MCF 10A (cell line): ENCODE measurements at regions of chr1 and their contacts with region 1.

Region 1: DNA sequence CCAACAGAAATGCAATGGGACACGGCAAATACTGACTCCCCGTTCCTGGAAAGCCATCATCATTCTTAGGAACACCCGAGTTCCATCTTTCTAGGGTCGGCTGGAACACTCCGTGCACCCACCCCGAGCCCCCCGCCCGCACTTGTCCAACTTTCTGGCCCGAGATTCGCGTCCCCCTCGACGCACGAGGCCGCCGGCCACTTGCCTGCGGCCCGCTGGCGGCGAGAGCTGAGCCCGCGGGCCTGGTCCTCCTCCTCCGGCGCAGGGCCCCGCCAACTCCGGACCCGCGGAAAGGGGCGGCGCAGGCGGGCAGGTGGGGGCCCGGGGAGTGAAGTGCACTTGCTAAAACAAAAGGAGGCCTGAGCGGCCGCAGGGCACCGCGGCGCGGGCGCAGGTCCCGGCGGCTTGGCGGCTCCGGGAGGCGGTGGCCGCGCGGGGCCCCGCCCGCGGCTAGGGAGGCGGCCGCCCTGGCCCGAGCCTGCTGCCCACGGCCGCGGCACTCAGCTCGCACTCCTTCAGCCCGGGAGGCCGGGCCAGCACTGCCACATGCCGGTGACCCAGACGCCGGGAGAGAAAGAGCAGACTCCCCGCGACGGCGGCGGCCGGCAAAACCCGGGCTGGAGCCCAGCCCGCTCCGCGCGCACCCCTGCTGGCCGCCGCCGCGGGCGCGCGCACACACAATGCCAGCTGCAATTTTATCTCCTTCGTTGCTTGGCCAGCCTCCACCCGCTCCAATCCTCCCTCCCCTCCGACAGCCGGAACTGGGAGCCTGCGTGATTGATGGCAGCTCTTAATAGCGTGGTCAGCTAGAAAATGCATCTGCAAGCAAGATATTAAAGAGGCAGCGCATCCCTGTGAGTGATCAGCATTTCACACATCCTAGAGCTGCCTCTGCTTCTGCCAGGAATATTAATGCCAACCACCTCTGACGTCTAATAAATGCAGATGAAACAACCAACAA is 114.3 kb downstream of the RERE start:
- DNase-seq: peak; percentile 92
- H3K4me3 Mint-ChIP-seq: peak overlapping the region; percentile 79
- H3K27ac Mint-ChIP-seq: peak overlapping the region; percentile 90
- H3K4me1 Mint-ChIP-seq: peaks cover 28% of the 10 kb centered on the region
- H3K27me3 Mint-ChIP-seq: no peaks in the 10 kb centered on the region
- CTCF ChIP-seq: no peak

Region 2: DNA sequence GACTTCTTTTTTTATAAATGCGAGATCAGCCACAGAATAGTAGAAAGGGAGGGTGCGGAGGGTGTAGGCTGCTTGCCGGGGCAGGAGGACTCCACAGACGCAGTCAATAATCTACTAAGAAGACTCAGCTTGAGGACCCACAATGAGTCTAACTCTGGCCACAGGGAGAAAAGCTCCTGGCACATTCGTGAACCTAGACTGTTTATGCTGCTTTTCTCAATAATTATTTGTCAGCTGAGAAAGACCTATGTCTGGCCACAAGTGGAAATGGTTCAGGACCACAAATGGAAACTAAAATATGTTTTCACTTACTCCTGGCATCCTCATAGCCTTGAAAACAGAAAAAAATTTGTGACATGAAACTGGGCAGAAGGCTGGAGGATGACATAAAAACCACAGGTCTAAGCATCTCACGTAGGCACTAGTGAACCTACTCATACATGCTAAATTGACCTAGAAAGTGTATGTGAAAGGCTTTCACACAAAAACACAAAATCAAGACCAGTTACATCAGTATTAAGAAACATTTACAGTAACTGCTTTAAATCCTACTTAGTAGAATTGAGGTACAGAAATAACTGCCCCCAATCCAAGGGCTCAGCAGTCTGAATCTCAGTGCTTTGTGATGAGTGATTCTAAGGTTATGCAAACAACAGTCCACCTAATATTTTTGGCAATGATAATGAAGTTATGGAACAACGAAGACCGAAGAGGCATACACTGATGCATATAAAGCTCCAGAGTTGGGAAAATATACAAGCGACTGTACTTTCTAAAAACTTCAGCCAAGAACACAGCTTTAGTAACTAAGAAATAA is 225.8 kb before region 1 on chr1:
- CTCF ChIA-PET with region 1: no interaction called
- POLR2A ChIA-PET with region 1: no interaction called
- intact Hi-C with region 1: no loop called
- DNase-seq: no peak
- H3K4me3 Mint-ChIP-seq: no peak overlapping the region
- H3K27ac Mint-ChIP-seq: peak overlapping the region; percentile 35
- H3K4me1 Mint-ChIP-seq: peaks cover 5% of the 10 kb centered on the region
- H3K27me3 Mint-ChIP-seq: no peaks in the 10 kb centered on the region
- CTCF ChIP-seq: no peak

Region 3: DNA sequence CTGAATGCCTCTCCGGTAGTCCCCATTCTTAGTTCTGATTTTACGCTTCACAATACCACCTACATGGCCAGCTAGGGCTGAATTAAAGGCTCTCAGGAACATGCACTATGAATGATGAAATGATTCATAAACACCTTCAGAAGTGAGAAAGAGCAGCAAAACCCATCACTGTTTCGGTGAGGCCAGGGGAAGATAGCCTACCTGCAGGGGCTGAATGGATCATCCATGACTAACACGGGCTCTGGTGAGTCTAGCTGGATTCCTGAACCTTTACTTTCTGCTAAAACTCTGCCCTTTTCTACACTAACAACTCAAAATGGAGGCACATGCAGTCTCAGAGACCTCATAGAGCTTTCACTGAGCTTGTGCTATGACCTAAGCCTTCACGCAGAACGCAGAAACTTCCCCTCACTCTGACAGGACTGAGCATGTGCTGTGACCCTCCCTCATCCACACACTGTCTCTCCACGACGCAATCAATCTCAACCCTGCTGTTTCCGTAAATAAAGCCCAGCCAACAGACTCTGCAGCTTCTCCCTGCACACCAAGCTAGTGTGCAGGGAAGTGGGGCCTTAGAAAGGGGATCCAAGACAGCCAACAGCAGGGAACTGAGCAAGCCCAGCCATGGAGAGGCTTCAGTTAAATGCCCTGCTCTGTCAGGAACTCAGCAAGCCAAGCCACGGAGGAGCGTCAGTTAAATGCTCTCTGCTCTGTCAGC is 177.4 kb before region 1 on chr1:
- CTCF ChIA-PET with region 1: no interaction called
- POLR2A ChIA-PET with region 1: interaction called, 17 read pairs
- intact Hi-C with region 1: no loop called
- DNase-seq: peak; percentile 91
- H3K4me3 Mint-ChIP-seq: no peak overlapping the region
- H3K27ac Mint-ChIP-seq: no peak overlapping the region
- H3K4me1 Mint-ChIP-seq: peaks cover 23% of the 10 kb centered on the region
- H3K27me3 Mint-ChIP-seq: no peaks in the 10 kb centered on the region
- CTCF ChIP-seq: no peak

Region 4: GRCh38 chr1:8560611-8561544 is 142.3 kb before region 1 on chr1:
- CTCF ChIA-PET with region 1: interaction called, 7 read pairs
- POLR2A ChIA-PET with region 1: interaction called, 17 read pairs
- intact Hi-C with region 1: loop called (anchors 1 kb)
- DNase-seq: peak; percentile 69
- H3K4me3 Mint-ChIP-seq: no peak overlapping the region
- H3K27ac Mint-ChIP-seq: no peak overlapping the region
- H3K4me1 Mint-ChIP-seq: peaks cover 6% of the 10 kb centered on the region
- H3K27me3 Mint-ChIP-seq: no peaks in the 10 kb centered on the region
- CTCF ChIP-seq: peak; percentile 84

Region 5: DNA sequence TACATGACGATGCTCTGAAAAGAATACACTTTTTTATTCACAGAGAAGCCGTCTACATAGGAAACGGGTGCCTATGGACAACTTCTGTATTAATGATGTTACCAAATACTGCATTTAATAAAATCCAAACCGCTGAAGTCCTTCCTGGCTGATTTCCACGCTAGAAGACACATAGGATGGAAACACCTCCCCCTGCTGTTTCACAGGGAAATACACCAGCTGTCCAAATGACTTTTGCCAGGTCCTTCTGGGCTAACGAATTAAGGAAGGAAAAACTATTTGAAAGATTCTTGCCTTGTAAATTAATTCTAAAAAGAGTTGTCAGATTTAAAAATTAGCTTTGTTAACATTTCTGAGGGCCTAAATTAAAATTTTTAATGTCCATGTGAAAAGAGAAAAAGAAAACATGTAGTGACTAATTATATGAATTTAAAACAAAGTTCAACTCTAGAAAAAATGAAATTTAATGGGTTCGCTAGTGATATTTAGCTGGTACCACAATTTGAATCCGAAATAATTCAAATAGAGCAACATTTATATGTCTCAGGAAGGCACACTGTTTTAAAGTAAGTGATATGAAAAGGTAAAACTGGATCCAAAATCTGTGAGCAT is 31.7 kb before region 1 on chr1:
- CTCF ChIA-PET with region 1: interaction called, 7 read pairs
- POLR2A ChIA-PET with region 1: interaction called, 48 read pairs
- intact Hi-C with region 1: no loop called
- DNase-seq: peak; percentile 76
- H3K4me3 Mint-ChIP-seq: no peak overlapping the region
- H3K27ac Mint-ChIP-seq: peak overlapping the region; percentile 80
- H3K4me1 Mint-ChIP-seq: peaks cover 44% of the 10 kb centered on the region
- H3K27me3 Mint-ChIP-seq: no peaks in the 10 kb centered on the region
- CTCF ChIP-seq: peak; percentile 81

Region 6: GRCh38 chr1:8718850-8719361 is 15.8 kb after region 1 on chr1:
- CTCF ChIA-PET with region 1: interaction called, 10 read pairs
- POLR2A ChIA-PET with region 1: interaction called, 54 read pairs
- intact Hi-C with region 1: no loop called
- DNase-seq: no peak
- H3K4me3 Mint-ChIP-seq: no peak overlapping the region
- H3K27ac Mint-ChIP-seq: no peak overlapping the region
- H3K4me1 Mint-ChIP-seq: peaks cover 20% of the 10 kb centered on the region
- H3K27me3 Mint-ChIP-seq: no peaks in the 10 kb centered on the region
- CTCF ChIP-seq: no peak

Region 7: DNA sequence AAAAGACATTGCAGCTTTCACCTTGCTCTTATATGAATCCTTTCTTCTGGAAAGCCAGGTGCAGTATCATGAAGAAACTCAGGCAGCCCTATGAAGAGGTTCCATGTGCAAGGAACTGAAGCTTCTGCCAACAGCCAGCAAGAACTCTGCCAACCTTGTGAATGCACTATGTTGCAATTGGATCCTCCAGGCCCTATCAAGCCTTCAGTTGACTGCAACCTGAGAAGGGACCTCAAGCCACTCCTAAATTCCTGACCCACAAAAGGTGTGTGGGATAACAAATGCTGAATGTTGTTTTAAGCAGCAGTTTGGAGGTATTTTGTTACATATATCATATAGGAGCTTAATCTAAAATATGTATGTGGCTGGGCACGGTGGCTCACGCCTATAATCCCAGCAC is 30.3 kb after region 1 on chr1:
- CTCF ChIA-PET with region 1: interaction called, 3 read pairs
- POLR2A ChIA-PET with region 1: interaction called, 54 read pairs
- intact Hi-C with region 1: no loop called
- DNase-seq: peak; percentile 96
- H3K4me3 Mint-ChIP-seq: no peak overlapping the region
- H3K27ac Mint-ChIP-seq: no peak overlapping the region
- H3K4me1 Mint-ChIP-seq: peaks cover 6% of the 10 kb centered on the region
- H3K27me3 Mint-ChIP-seq: no peaks in the 10 kb centered on the region
- CTCF ChIP-seq: no peak

Region 8: DNA sequence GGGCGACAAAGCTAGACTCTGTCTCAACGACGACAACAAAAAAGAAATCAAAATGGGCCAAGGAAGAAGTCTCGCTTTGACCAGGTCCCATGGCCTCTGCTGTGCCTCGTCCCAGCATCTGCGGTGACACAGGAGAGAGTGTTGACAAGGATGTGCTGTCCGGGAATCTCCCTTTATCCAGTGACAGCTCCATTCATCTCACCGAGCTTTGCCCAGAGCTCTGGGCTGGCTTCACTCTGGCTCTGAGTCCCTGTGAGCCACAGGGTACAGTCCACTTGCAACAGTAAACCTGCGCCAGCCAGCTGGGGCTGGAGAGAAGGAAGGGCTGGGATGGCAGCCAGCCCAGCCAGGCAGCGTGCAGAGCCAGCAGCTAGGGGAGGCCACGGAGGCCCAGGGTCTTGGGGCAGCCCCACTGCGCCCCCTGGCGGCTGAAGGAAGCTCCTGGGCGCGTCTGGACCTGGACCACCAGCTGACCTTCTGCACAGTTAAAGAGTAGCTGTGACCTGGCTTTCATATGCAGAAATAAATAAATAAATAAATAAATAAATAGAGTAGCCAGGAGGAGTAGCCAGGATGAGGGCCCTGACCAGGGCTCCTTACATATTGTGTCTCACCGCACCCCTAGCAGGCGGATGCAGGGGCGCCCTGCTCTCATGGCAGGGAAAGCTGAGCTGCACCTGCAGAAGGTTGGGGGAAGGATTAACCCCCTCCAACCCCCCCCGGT is 145.7 kb after region 1 on chr1:
- CTCF ChIA-PET with region 1: interaction called, 16 read pairs
- POLR2A ChIA-PET with region 1: interaction called, 6 read pairs
- intact Hi-C with region 1: no loop called
- DNase-seq: peak; percentile 95
- H3K4me3 Mint-ChIP-seq: no peak overlapping the region
- H3K27ac Mint-ChIP-seq: no peak overlapping the region
- H3K4me1 Mint-ChIP-seq: peaks cover 4% of the 10 kb centered on the region
- H3K27me3 Mint-ChIP-seq: peaks cover 4% of the 10 kb centered on the region
- CTCF ChIP-seq: peak; percentile 88

Region 9: DNA sequence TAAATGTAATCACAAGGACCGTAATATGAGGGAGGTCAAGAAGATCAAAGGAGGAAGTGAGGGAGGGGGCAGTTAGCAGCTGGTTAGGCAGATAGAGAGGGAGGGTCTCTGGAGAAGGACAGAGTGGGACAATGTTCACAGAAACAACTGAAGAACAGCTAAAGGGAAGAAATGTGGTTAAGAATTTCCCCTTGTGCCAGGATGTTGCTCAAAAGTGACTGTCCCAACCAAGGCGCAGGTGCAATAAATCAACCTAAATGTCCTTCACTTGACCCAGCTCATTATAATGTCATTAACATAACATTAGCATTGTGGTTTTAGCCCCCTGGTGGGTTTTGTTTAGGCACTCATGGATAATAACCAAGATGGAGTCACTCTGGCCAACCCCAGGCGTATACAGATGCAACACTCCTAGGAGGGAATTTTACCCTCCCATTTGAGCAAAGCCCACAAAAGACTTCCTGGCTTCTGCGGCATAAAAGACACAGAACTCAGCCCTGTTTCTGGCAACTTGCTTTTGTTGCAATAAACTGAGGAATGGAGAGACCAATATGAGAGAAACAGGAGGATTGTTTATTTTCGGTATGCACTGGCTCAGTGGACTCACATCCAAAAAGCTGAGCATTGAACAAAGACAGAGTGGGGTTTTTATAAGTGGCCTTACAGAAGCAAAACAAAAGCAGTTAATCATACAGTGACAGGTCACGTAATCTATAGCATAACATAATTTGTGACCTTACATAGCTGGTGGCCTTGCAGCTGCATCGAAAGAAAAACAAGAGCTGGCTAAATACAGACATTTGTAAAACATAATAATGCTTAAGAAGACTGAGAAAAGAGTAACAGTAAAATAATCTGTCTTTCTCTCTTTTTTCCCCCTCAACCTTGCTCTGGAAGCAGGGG is 235.4 kb after region 1 on chr1:
- CTCF ChIA-PET with region 1: no interaction called
- POLR2A ChIA-PET with region 1: no interaction called
- intact Hi-C with region 1: no loop called
- DNase-seq: no peak
- H3K4me3 Mint-ChIP-seq: no peak overlapping the region
- H3K27ac Mint-ChIP-seq: no peak overlapping the region
- H3K4me1 Mint-ChIP-seq: peaks cover 11% of the 10 kb centered on the region
- H3K27me3 Mint-ChIP-seq: no peaks in the 10 kb centered on the region
- CTCF ChIP-seq: no peak